Activated CD8-positive, alpha-beta memory T cell treated with anti-CD3 and anti-CD28 coated beads, Interleukin-2, amount 10 ng/mL, durations not matched to agents 7 days and 5 days (primary cell): ENCODE measurements at regions of chr5 and their contacts with region 1.

Region 1: DNA sequence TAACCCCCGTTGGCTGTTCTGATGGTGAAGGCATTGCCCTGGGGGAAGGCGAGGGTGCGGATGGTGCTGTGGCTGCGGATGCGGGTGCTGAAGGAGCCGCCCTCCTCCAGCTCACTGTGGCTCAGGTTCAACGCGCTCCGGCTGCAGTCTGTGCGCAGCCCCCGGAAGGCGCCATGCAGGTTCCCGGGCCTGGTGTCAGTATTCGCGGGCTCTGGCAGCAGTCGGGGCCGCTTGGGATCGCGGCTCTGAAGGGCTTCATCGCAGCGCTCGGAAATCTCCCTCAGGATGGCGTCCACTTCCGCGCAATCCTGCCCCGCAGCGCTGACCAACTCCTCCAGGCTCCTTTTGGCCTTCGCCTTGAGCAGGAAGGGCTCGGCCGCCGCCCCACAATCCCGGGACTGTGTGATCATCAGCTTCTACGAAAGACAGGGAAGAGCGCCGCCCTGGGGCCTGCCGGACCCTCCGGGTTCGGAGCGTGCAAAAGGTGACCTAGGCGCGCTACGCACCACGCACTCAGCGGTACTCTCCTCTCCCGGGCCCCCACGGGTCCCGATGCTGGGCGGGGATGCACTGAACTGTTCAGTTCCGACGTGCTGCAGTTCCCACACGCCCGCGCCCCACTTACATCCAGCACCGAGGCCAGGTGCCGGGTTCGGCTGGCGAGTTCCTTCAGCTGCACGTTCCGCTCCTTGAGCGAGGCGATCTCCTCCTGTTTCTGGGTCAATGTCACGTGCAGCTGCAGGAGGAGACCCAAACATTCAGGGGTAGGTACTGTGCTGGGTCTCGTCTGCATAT is 6.5 kb downstream of the MCIDAS start:
- DNase-seq: no peak
- ATAC-seq: peak; percentile 56
- H3K4me3 Mint-ChIP-seq: peak overlapping the region; percentile 63
- H3K27ac Mint-ChIP-seq: no peak overlapping the region
- H3K4me1 Mint-ChIP-seq: peaks cover 20% of the 10 kb centered on the region
- H3K27me3 Mint-ChIP-seq: peaks cover 78% of the 10 kb centered on the region

Region 2: GRCh38 chr5:55232985-55233928 is 12.7 kb after region 1 on chr5 and contains the start of gene CCNO:
- CTCF ChIA-PET with region 1: interaction called, 10 read pairs
- DNase-seq: peak; percentile 80
- ATAC-seq: peak; percentile 87
- H3K4me3 Mint-ChIP-seq: peak within 1 kb of the TSS; percentile 72
- H3K27ac Mint-ChIP-seq: peak within 1 kb of the TSS; percentile 33
- H3K4me1 Mint-ChIP-seq: peaks cover 30% of the 10 kb centered on the region
- H3K27me3 Mint-ChIP-seq: peaks cover 78% of the 10 kb centered on the region
- total RNA-seq, gene CCNO: 0.26 TPM

Region 3: GRCh38 chr5:55480781-55481180 is 260.2 kb after region 1 on chr5:
- CTCF ChIA-PET with region 1: no interaction called
- DNase-seq: no peak
- ATAC-seq: no peak
- H3K4me3 Mint-ChIP-seq: no peak overlapping the region
- H3K27ac Mint-ChIP-seq: no peak overlapping the region
- H3K4me1 Mint-ChIP-seq: peaks cover 12% of the 10 kb centered on the region
- H3K27me3 Mint-ChIP-seq: no peaks in the 10 kb centered on the region